BJ (cell line): ENCODE measurements at regions of chr1 and their contacts with region 1.

Region 1: DNA sequence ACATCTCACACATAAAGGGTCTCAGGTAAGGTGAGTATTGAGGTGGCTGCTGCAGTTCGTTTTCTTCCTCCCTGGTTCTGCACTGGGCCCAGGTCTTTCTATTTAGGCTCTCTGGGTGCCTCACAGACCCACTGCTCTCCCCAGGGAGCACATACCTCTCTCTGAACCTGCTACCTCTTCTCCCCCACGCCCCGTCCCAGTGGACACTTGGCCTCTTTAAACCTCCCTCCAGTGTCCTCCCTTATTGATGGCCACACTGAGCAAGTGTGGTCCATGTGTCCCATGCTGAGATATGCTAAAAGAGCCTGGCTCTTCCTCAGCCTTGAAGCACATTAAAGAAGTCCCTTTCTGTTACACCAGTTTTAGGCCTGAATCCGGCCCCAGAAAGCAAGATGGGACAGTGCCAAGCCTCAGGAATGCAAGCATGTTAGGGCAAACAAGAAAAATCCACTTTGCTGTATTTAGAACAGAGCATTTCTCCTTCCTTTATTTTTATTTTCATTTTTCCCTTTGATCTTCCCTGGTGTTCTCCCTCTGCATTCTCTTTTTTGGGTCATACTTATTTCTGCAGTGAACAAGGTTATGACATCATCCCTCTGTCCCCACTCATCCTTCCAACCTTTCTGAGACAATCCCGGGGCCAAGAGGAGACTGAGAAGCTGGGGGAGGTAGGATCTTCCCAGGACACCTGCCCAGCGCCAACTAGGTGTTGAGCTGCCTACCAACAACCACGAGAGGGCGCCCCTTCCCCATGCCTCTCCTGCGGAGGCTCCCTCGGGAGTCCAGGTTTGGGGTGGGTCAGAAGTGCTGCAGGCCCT is 5.0 kb upstream of the CHI3L2 start:
- DNase-seq: no peak
- H3K4me3 ChIP-seq: no peak overlapping the region
- H3K27me3 ChIP-seq: no peaks in the 10 kb centered on the region
- CTCF ChIP-seq: peak; percentile 87

Region 2: DNA sequence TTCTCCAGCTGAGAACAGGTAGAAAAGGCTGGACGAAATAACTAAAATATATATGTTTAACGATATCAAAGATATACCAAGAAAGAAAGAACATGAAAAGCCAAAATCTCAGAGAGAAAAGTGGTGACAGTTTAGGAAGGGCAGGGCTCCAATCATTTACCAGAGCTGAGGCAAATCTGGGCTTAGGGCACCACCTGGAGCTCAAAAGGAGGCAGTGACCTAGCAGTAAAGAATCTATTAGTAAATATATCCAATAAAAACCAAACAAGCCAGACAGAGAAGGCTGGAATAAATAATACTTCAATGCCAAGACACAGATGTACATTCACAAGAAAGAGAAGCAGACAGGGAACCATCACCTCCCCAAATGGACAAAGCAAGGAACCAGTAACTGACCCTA is 111.7 kb after region 1 on chr1:
- CTCF ChIA-PET with region 1: interaction called, 23 read pairs
- POLR2A ChIA-PET with region 1: no interaction called
- DNase-seq: no peak
- H3K4me3 ChIP-seq: no peak overlapping the region
- H3K27me3 ChIP-seq: peaks cover 2% of the 10 kb centered on the region; the same call in 1 of the 2 replicates
- CTCF ChIP-seq: peak; percentile 68